ENCODE measurements at regions of chr15 and their contacts with region 1.

Region 1: DNA sequence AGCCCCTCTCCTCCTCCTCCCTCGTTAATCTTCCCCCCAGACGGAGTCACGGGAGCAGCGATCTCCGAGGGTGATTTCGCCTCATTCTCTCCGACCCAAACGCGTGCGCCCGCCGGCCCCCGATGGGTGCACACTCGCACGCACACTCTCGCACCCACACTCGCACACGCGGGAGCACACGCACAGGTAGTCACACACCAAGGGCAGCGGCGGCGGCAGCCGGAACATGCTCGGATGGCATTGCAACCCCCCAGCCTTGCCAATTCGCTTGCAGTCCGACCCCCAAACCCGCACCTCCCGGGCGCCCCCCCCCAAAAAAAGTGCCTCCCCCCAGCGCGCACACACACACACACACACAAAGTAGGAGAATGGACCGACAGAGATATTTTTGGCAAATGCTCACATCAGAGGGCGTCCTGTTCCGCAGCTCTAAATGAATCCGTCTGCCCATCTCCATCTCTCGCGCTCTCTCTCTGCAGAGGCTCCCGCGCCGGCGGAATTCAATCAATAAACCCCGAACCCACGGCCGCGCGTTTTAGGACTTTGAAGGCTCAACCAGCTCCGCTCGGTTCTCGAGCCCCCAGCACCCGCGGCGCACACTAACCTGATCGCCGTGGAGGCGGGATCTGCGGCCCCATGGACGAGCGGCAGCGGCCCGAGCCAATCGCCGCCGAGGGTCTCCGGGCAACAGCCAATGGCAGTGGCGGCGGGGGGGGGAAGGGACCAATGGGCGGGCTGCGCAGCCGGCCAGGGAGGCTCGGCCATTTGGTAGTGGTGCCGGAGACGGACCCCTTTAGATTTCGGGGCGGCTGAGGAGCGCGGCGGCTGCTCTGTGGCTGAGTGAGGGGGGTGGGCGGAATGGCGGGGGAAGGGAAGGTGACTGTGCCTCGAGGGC is at the start of gene ANP32A:
- DNase-seq: peak; percentile 97 to 98
- H3K4me3 ChIP-seq: peak within 1 kb of the TSS; percentile 57 to 96 (median 88)
- H3K27ac ChIP-seq: peak within 1 kb of the TSS; percentile 99 to 100 (median 99)
- H3K4me1 ChIP-seq: peaks cover 14 to 19% of the 10 kb centered on the region in 2 donors
- H3K27me3 ChIP-seq: no peaks in the 10 kb centered on the region
- CTCF ChIP-seq: no peak
- POLR2A ChIP-seq: peak; percentile 50 to 86
- total RNA-seq, gene ANP32A: 65.4 to 116 (median 79.5) TPM

Region 2: DNA sequence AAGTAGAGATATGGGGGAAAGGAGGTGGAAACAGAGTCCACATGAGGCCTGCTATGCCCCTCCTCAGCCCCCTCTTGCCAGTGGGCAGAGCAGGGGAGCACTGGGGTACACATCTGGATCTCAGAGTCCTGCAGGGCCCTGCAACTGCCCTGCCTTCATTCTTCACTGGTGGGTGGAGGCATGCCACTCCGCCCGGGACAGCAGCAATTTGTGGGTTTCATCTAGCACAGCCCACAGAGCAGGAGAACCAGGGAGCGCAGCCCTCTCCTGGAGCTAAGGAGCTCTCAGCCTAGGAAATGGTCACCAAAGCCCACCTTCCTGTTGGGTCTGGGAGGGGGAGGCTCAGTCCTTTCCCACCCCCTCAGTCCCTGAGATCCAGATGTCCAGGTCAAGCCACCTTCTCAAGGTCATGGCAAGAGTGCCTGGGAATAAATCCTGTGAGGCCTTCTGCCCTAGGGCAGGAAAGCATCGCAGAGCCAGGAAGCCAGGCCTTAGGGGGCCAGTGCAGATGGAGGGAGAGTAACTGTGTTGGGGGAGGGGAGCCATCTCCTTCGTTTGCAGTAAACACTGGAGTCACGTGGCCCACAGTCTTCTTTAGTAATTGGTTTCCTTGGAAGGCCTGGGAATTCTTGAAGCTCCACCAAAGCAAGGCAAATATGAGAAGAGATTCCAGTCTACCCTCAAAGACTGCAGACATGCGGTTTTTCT is 30.9 kb before region 1 on chr15:
- intact Hi-C with region 1: loop called (anchors 5 kb)
- DNase-seq: no peak
- H3K4me3 ChIP-seq: no peak overlapping the region
- H3K27ac ChIP-seq: peak overlapping the region in 2 of 3 donors; percentile 25 to 27
- H3K4me1 ChIP-seq: peaks cover 54 to 67% of the 10 kb centered on the region in 2 donors
- H3K27me3 ChIP-seq: no peaks in the 10 kb centered on the region
- CTCF ChIP-seq: no peak
- POLR2A ChIP-seq: no peak

Measured in thyroid gland (tissue), 4 donors.